PC-3 (cell line): ENCODE measurements at regions of chr5 and their contacts with region 1.

Region 1: DNA sequence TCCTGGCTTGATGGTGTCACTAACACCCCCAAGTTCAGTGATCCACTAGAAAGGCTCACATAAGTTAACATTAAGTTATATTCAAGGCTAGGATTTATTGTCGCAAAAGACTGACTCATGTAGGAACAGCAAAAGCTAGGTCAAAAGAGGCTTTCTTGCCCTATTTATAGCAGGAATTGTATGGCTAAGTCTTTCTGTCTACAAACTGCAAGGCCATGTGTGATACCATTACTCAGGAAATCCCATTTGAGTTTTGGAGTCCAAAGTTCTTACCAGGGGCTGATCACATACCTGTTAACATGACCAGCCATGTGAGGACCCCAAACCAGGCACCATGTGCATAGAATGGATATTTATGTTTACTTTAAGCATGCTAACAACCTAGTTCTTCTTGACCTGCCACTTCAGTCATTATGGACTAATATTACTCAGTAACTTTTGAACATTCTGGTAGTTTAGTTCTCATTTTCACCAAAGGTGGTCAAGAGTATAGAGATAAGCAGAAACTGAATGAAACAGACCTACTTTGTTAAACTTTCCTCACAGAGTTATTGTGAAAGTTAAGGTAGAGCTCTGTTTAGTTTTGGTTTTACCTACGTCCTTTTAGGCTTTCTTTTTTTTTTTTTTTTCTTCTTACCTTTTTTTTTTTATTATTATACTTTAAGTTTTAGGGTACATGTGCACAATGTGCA is 281.1 kb downstream of the FER start:
- DNase-seq: peak; percentile 50
- ATAC-seq: peak; percentile 81
- H3K4me3 ChIP-seq: no peak overlapping the region
- H3K27ac ChIP-seq: peak overlapping the region; percentile 28
- H3K4me1 ChIP-seq: peaks cover 16% of the 10 kb centered on the region
- H3K27me3 ChIP-seq: no peaks in the 10 kb centered on the region
- CTCF ChIP-seq: no peak

Region 2: GRCh38 chr5:108793207-108793606 is 235.5 kb before region 1 on chr5:
- CTCF ChIA-PET with region 1: no interaction called
- POLR2A ChIA-PET with region 1: interaction called, 13 read pairs
- intact Hi-C with region 1: no loop called
- DNase-seq: no peak
- ATAC-seq: no peak
- H3K4me3 ChIP-seq: no peak overlapping the region
- H3K27ac ChIP-seq: no peak overlapping the region
- H3K4me1 ChIP-seq: peaks cover 19% of the 10 kb centered on the region
- H3K27me3 ChIP-seq: no peaks in the 10 kb centered on the region
- CTCF ChIP-seq: no peak

Region 3: GRCh38 chr5:108935611-108936010 is 93.1 kb before region 1 on chr5:
- CTCF ChIA-PET with region 1: no interaction called
- POLR2A ChIA-PET with region 1: no interaction called
- intact Hi-C with region 1: no loop called
- DNase-seq: no peak
- ATAC-seq: no peak
- H3K4me3 ChIP-seq: no peak overlapping the region
- H3K27ac ChIP-seq: no peak overlapping the region
- H3K4me1 ChIP-seq: no peaks in the 10 kb centered on the region
- H3K27me3 ChIP-seq: no peaks in the 10 kb centered on the region
- CTCF ChIP-seq: no peak

Region 4: GRCh38 chr5:109078448-109078847 is 49.7 kb after region 1 on chr5:
- CTCF ChIA-PET with region 1: no interaction called
- POLR2A ChIA-PET with region 1: interaction called, 11 read pairs
- intact Hi-C with region 1: no loop called
- DNase-seq: peak; percentile 22
- ATAC-seq: peak; percentile 91
- H3K4me3 ChIP-seq: no peak overlapping the region
- H3K27ac ChIP-seq: no peak overlapping the region
- H3K4me1 ChIP-seq: no peaks in the 10 kb centered on the region
- H3K27me3 ChIP-seq: no peaks in the 10 kb centered on the region
- CTCF ChIP-seq: no peak